CD14-positive monocyte (primary cell): ENCODE measurements at regions of chr4 and their contacts with region 1.

Region 1: DNA sequence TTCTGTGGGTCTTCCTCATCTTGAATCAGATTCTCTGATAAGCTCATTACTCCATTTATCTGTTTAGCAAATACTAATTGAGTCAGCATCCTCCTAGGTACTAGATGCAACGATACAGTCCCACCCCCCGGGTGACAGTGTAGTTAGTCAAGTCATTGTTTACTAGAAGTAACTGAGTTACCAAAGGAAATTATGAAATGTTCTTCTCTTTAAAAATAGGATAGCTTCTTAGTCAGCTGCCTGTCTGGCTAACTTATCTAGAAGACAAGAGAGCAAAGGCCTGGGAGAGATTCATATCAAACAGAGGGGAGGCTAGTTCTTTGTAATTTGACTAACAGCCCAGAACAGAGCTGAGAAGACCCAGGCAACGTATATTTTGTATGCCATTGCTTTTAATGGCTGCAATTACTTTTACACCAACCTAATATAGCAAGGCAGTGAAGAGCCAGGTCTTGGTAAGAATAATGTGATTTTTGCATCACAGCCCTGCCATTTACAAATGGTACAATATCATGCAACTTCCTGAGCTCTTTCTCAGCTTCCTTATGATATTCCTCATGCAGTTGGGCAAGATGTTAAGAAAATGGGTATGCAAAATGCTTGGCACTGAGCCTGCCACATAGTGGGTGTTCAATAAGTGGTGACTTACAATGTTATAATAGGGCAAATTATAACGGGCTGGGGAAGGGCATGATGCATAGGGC is 149.9 kb downstream of the CHIC2 start:
- DNase-seq: peak; percentile 85 to 99 (median 94)
- H3K4me3 ChIP-seq: peak overlapping the region in 1 of 3 experiments; percentile 27
- H3K4me3 Mint-ChIP-seq: peak overlapping the region in 1 of 2 donors; percentile 58
- H3K27ac ChIP-seq: peak overlapping the region; percentile 84 to 93
- H3K27ac Mint-ChIP-seq: peak overlapping the region; percentile 96 to 99 (median 98)
- H3K4me1 ChIP-seq: peaks cover 71 to 77% of the 10 kb centered on the region in 2 donors
- H3K4me1 Mint-ChIP-seq: peaks cover 72% of the 10 kb centered on the region
- H3K27me3 ChIP-seq: no peaks in the 10 kb centered on the region
- H3K27me3 Mint-ChIP-seq: peaks cover 0 to 2% (median 1%) of the 10 kb centered on the region in 3 donors
- CTCF ChIP-seq: no peak

Region 2: DNA sequence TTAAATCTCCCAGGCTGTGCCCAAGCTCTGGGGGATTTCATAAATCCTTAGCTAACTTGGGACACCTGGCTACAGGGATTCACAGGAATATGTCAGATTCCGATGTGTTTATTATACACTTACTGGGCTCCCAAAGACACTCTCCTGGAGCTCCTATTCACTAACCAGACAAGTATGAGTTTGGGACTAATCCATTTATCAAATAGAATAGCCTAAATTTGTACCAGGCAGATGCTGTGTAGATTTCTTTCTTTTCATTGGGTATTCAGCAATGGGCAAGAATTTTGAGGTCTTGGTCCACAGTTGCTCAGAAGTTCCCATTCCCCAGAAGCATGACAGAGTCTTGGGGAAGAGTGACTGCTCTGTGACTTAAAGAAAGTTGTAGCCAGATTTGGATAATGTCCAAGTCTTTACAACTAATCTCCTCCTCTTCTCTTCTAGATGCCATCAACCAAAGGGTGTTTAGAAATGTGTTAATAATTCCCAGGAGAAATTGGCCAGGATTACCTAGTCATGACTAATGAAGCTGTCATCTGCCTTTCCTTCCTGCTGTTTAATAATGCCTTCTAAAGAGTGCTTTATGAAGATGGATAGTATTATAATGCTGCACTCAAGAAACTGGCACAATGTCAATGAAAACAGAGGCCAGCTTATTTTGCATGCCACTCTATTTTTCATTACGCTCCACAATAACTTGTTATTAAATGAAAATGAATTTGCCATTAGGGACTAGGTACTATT is 29.1 kb after region 1 on chr4:
- intact Hi-C with region 1: no loop called
- DNase-seq: no peak
- H3K4me3 ChIP-seq: no peak overlapping the region
- H3K4me3 Mint-ChIP-seq: no peak overlapping the region
- H3K27ac ChIP-seq: no peak overlapping the region
- H3K27ac Mint-ChIP-seq: no peak overlapping the region
- H3K4me1 ChIP-seq: no peaks in the 10 kb centered on the region
- H3K4me1 Mint-ChIP-seq: no peaks in the 10 kb centered on the region
- H3K27me3 ChIP-seq: no peaks in the 10 kb centered on the region
- H3K27me3 Mint-ChIP-seq: peaks cover 2 to 5% (median 4%) of the 10 kb centered on the region in 3 donors
- CTCF ChIP-seq: no peak

Region 3: DNA sequence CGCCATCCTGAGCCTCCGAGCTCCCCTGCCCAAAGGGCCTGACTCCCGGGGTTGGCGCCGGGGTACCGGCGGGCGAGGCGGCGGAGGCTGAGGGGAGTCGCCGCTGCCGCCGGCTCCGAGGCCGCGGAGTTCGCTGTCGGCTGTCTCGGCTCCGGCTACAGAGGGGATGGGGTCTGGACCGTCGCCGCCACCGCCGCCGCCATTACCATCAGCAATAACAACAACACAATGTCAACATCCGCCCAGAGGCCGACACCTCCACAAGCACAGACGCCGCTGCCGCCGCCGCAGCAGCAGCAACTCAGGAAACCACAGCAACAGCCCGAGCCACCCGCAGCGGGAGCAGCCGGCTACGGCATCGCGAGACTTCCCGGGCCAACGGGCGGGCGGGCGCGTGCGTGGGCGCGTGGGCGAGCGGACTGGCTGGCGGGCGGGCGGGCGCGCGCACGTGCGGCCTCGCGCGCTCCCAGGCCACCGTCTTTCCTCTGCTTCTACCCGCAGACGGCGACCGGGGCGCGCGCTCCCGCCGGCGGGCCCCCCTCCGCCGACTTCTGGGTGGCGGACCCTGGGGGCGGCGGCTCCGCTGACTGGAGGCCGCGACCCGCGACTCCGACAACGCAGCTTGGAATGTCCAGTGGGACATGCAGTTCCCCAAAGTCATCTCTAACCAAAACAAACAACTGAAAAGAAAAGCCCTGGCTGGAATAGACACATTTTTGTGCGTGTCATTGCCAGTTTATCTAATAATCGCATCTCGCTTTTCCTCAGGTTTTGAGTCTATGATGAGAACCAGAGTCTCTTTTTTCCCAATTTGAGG is 150.0 kb after region 1 on chr4 and contains the start of gene CHIC2:
- intact Hi-C with region 1: loop called (anchors 5 to 10 kb)
- DNase-seq: peak; percentile 92 to 96 (median 92)
- H3K4me3 ChIP-seq: peak within 1 kb of the TSS; percentile 94 to 97 (median 97)
- H3K4me3 Mint-ChIP-seq: peak within 1 kb of the TSS; percentile 91 to 96
- H3K27ac ChIP-seq: peak within 1 kb of the TSS; percentile 99
- H3K27ac Mint-ChIP-seq: peak within 1 kb of the TSS; percentile 96 to 99 (median 98)
- H3K4me1 ChIP-seq: peaks cover 16 to 34% of the 10 kb centered on the region in 2 donors
- H3K4me1 Mint-ChIP-seq: peaks cover 39% of the 10 kb centered on the region
- H3K27me3 ChIP-seq: no peaks in the 10 kb centered on the region
- H3K27me3 Mint-ChIP-seq: peaks cover 0 to 3% (median 1%) of the 10 kb centered on the region in 3 donors
- CTCF ChIP-seq: no peak
- polyA plus RNA-seq, gene CHIC2: 23.1 to 83.3 (median 73.4) TPM

Region 4: GRCh38 chr4:54107951-54108873 is 193.7 kb after region 1 on chr4:
- intact Hi-C with region 1: no loop called
- DNase-seq: no peak
- H3K4me3 ChIP-seq: peak overlapping the region in 1 of 3 experiments; percentile 40
- H3K4me3 Mint-ChIP-seq: peak overlapping the region; percentile 54 to 95
- H3K27ac ChIP-seq: no peak overlapping the region
- H3K27ac Mint-ChIP-seq: no peak overlapping the region
- H3K4me1 ChIP-seq: peaks cover 13 to 29% of the 10 kb centered on the region in 2 donors
- H3K4me1 Mint-ChIP-seq: peaks cover 30% of the 10 kb centered on the region
- H3K27me3 ChIP-seq: peaks cover 90 to 97% of the 10 kb centered on the region in 2 donors
- H3K27me3 Mint-ChIP-seq: peaks cover 87 to 89% (median 88%) of the 10 kb centered on the region in 3 donors
- CTCF ChIP-seq: no peak